ENCODE measurements at regions of chr17 and their contacts with region 1.

Region 1: GRCh38 chr17:76365256-76365903 is 11.7 kb upstream of the PRPSAP1 start:
- DNase-seq: no peak
- ATAC-seq: peak; percentile 89
- H3K4me3 ChIP-seq: no peak overlapping the region
- H3K27ac ChIP-seq: no peak overlapping the region
- H3K4me1 ChIP-seq: 0 out of 2 replicates have a peak, but pooled peaks cover 5% of the 10 kb centered on the region
- H3K27me3 ChIP-seq: no peaks in the 10 kb centered on the region
- CTCF ChIP-seq: peak; percentile 83

Region 2: DNA sequence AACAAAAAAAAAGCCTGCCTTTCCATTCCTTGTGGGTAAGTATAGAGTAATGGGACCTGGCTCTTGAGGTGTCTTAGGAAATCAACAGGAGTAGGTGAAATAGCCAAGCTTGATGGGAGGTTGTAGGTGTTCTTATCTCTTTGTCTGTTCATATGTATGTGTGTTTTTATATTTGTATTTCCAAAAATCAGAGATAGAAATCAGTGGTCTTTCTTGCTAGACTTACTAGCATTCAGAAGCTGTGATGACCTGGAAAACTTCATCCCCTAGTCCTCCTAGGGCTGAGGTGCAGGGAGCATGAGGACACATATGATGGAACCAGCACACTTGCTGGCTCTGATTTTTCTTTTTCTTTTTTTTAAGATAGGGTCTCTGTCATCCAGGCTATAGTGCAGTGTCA is 578.5 kb before region 1 on chr17:
- CTCF ChIA-PET with region 1: interaction called, 18 read pairs
- POLR2A ChIA-PET with region 1: no interaction called
- in situ Hi-C with region 1: no loop called
- intact Hi-C with region 1: no loop called
- DNase-seq: no peak
- ATAC-seq: no peak
- H3K4me3 ChIP-seq: peak overlapping the region; percentile 59 to 76
- H3K27ac ChIP-seq: peak overlapping the region; percentile 100
- H3K4me1 ChIP-seq: peaks cover 35% of the 10 kb centered on the region
- H3K27me3 ChIP-seq: no peaks in the 10 kb centered on the region
- CTCF ChIP-seq: no peak

Region 3: DNA sequence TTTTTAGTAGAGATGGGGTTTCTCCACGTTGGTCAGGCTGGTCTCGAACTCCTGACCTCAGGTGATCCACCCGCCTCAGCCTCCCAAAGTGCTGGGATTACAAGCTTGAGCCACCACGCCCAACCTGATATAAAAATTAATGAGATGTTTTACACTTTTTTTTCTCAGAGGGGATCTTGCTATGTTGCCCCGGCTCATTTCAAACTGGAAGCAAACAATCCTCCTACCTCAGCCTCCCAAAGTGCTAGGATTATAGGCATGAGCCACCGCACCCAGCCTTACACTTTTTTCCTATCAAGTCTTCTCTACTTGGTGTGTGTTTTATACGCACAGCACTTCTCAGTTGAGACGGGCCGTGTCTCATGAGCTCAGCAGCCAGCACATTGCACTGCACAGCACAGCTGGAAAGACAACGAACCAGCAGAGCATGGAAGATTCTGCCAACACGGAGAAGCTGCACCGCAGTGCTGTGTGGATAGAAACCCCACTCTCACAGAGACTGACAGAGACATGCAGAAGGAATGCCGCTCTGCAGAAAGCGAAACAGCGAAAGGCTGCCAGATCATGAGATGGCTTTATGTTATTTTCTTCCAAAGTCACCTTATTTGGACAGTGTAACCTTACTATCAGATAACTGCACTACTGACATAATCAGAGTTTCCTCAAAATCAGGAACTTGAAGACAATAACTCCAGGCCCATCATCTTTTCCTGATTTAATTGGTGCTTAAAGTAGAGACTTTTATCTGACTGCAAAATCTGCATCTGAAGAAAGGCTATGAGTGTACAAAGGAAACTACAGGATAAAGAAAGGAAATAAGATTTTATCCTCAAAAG is 50.8 kb before region 1 on chr17:
- CTCF ChIA-PET with region 1: no interaction called
- POLR2A ChIA-PET with region 1: interaction called, 13 read pairs
- in situ Hi-C with region 1: no loop called
- intact Hi-C with region 1: no loop called
- DNase-seq: no peak
- ATAC-seq: no peak
- H3K4me3 ChIP-seq: no peak overlapping the region
- H3K27ac ChIP-seq: no peak overlapping the region
- H3K4me1 ChIP-seq: no peaks in the 10 kb centered on the region
- H3K27me3 ChIP-seq: no peaks in the 10 kb centered on the region
- CTCF ChIP-seq: no peak

Region 4: GRCh38 chr17:76353599-76354316 is 11.6 kb before region 1 on chr17 and contains the start of gene PRPSAP1:
- CTCF ChIA-PET with region 1: interaction called, 14 read pairs
- POLR2A ChIA-PET with region 1: no interaction called
- in situ Hi-C with region 1: no loop called
- intact Hi-C with region 1: no loop called
- DNase-seq: peak; percentile 74
- ATAC-seq: peak; percentile 97
- H3K4me3 ChIP-seq: peak within 1 kb of the TSS; percentile 78 to 89
- H3K27ac ChIP-seq: peak within 1 kb of the TSS; percentile 94
- H3K4me1 ChIP-seq: peaks cover 16% of the 10 kb centered on the region
- H3K27me3 ChIP-seq: no peaks in the 10 kb centered on the region
- CTCF ChIP-seq: no peak
- total RNA-seq, gene PRPSAP1: 99.6 TPM

Region 5: DNA sequence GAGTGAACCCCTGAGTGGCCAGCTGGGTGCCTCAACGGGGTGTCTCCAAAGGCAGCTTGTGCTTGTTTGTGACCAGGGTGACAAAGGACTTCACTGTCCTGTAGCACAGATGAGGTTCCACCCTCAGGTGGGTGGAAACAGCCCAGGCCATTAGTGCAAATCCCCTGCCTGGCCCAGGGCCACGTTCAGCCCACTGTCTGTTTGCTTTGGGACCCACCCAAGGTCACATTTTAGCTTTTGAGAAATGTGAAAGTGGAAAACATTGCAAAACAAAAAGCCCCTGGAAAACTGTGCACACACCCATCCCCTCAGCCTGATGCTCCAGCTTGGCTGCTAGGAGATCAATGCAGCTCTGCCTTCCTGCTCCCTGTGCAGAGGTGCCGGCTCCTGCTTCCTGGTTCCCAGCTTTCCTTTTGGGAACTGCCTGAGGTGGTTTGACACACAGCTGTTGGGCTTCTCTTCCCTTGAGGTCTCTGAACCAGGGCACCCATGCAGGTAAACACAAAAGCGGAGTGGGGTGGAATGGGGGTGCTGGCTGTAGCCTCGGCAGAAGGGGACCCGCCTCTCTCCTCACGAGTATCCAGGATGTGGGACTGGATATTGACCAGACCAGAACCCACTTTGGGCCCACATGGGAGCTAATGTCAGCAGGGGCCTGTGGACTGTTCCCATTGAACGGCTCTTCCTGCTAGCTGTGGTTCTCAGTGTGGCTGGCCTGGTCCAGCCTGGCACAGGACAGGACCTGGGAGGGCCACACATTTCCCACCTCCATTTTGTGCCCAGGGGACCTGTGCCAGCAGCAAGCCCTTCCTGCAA is 11.1 kb after region 1 on chr17:
- CTCF ChIA-PET with region 1: interaction called, 15 read pairs
- POLR2A ChIA-PET with region 1: no interaction called
- in situ Hi-C with region 1: no loop called
- intact Hi-C with region 1: no loop called
- DNase-seq: no peak
- ATAC-seq: 0 out of 2 replicates have a peak, but pooled peaks have one; percentile 24
- H3K4me3 ChIP-seq: no peak overlapping the region
- H3K27ac ChIP-seq: no peak overlapping the region
- H3K4me1 ChIP-seq: no peaks in the 10 kb centered on the region; the same call in 1 of the 2 replicates
- H3K27me3 ChIP-seq: no peaks in the 10 kb centered on the region
- CTCF ChIP-seq: no peak

Region 6: GRCh38 chr17:76384222-76384986 is 19.0 kb after region 1 on chr17 and contains the start of gene SPHK1:
- CTCF ChIA-PET with region 1: interaction called, 25 read pairs
- POLR2A ChIA-PET with region 1: interaction called, 3 read pairs
- in situ Hi-C with region 1: no loop called
- intact Hi-C with region 1: no loop called
- DNase-seq: no peak
- ATAC-seq: peak; percentile 84
- H3K4me3 ChIP-seq: peak within 1 kb of the TSS; percentile 59 to 69
- H3K27ac ChIP-seq: peak within 1 kb of the TSS; percentile 79
- H3K4me1 ChIP-seq: peaks cover 13% of the 10 kb centered on the region; the same call in 1 of the 2 replicates
- H3K27me3 ChIP-seq: no peaks in the 10 kb centered on the region
- CTCF ChIP-seq: no peak
- total RNA-seq, gene SPHK1: 18.2 TPM

Region 7: DNA sequence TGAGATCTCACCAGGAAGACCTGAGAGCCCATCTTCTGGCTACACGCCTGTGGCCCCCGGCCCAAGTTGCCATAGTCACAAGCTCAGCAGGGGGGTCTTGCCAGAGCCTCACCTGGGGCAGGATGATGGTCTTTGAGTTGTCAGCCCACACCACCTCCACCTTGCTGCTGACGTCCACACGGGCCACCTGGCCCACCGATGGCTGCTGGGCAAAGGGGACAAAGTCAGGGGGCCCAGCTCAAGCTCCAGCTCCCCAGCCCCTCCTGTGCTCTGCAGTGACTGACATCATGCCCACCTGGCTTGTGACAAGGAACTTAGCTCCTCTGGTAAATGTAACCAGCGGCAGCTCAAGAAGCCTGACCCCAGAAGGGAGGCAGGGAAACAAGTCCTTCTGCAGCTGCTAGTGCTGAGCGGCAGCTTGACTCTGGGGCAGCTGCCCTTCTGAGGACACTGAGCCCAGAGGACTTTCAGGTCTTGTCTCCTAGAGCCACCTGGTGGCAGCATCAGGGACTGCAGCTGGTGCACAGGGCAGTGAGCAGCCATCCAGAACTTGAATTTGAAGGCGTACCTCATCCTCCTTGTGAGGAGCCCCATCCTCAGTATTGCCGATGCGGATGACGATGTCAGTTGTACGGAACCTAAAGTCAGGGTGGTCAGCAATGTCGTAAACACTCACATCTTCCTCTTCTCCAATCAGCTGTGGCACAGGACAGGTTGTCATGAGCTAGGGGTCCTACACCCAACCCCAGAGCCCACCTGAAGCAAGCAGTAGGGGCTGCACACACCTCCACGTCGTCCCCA is 32.5 kb after region 1 on chr17:
- CTCF ChIA-PET with region 1: interaction called, 20 read pairs
- POLR2A ChIA-PET with region 1: no interaction called
- in situ Hi-C with region 1: no loop called
- intact Hi-C with region 1: no loop called
- DNase-seq: peak; percentile 64
- ATAC-seq: peak; percentile 93
- H3K4me3 ChIP-seq: no peak overlapping the region
- H3K27ac ChIP-seq: no peak overlapping the region
- H3K4me1 ChIP-seq: no peaks in the 10 kb centered on the region
- H3K27me3 ChIP-seq: no peaks in the 10 kb centered on the region
- CTCF ChIP-seq: peak; percentile 97

Region 8: GRCh38 chr17:76872221-76872873 is 507.0 kb after region 1 on chr17:
- CTCF ChIA-PET with region 1: no interaction called
- POLR2A ChIA-PET with region 1: no interaction called
- in situ Hi-C with region 1: no loop called
- intact Hi-C with region 1: no loop called
- DNase-seq: peak; percentile 54
- ATAC-seq: peak; percentile 78
- H3K4me3 ChIP-seq: peak overlapping the region in 1 of 2 experiments; percentile 33; a peak in 2 of 4 replicates
- H3K27ac ChIP-seq: peak overlapping the region; percentile 81
- H3K4me1 ChIP-seq: peaks cover 48% of the 10 kb centered on the region
- H3K27me3 ChIP-seq: no peaks in the 10 kb centered on the region
- CTCF ChIP-seq: no peak